ENCODE measurements at regions of chr11 and their contacts with region 1.

Region 1: GRCh38 chr11:66051766-66052663 is at the start of gene SF3B2:
- DNase-seq: peak; percentile 100
- H3K4me3 ChIP-seq: peak within 1 kb of the TSS; percentile 99
- H3K27ac ChIP-seq: peak within 1 kb of the TSS; percentile 89
- H3K4me1 ChIP-seq: peaks cover 21% of the 10 kb centered on the region
- H3K27me3 ChIP-seq: no peaks in the 10 kb centered on the region
- CTCF ChIP-seq: no peak
- total RNA-seq, gene SF3B2: 357 and 358 TPM in 2 replicates

Region 2: GRCh38 chr11:66001942-66002647 is 49.9 kb before region 1 on chr11 and contains the starts of genes BANF1 and EIF1AD:
- CTCF ChIA-PET with region 1: no interaction called
- POLR2A ChIA-PET with region 1: no interaction called
- intact Hi-C with region 1: loop called (anchors 2 kb)
- DNase-seq: peak; percentile 100
- H3K4me3 ChIP-seq: peak within 1 kb of the TSS; percentile 63
- H3K27ac ChIP-seq: peak within 1 kb of the TSS; percentile 93
- H3K4me1 ChIP-seq: peaks cover 3% of the 10 kb centered on the region
- H3K27me3 ChIP-seq: no peaks in the 10 kb centered on the region
- CTCF ChIP-seq: no peak
- total RNA-seq, gene BANF1: 541 and 556 TPM in 2 replicates
- total RNA-seq, gene EIF1AD: 69.4 and 86.2 TPM in 2 replicates

Region 3: GRCh38 chr11:66032962-66033735 is 18.9 kb before region 1 on chr11:
- CTCF ChIA-PET with region 1: interaction called, 11 read pairs
- POLR2A ChIA-PET with region 1: interaction called, 5 read pairs
- intact Hi-C with region 1: no loop called
- DNase-seq: no peak
- H3K4me3 ChIP-seq: no peak overlapping the region
- H3K27ac ChIP-seq: no peak overlapping the region
- H3K4me1 ChIP-seq: no peaks in the 10 kb centered on the region
- H3K27me3 ChIP-seq: no peaks in the 10 kb centered on the region
- CTCF ChIP-seq: no peak

Region 4: DNA sequence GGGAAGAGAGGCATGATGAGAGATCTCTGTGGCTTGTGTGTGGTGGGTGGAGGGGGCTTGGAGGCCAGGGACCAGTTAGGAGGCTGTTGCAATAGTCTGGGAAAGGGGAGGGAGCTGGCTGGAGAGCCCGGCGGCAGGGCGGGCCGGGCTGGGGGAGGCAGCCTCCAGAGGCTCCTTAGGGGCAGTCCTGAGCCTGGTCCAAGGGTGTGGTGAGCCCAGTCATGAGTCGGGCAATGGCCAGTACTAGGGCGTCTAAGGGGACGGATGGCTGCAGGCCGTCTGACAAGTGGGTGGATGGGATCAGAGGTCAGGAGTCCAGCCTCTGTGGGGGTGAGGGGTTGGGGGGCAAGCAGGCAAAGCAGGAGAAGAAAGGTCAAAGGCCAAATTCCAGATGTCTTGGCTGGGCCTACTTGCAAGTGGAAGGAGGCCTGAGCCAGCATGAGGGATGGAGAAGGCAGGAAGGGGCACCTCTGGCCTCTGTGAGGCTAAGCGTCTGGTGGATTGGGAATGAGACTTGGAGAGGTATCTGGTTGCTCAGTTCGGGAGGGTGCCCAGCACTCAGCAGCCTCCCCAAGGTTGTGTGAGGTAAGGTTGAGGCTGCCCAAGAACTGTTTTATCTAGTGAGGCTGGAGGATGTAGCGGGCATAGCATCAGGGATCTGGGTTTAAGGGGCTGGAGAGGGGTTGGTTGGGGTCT is 270.9 kb after region 1 on chr11:
- CTCF ChIA-PET with region 1: no interaction called
- POLR2A ChIA-PET with region 1: no interaction called
- intact Hi-C with region 1: no loop called
- DNase-seq: no peak
- H3K4me3 ChIP-seq: no peak overlapping the region
- H3K27ac ChIP-seq: peak overlapping the region; percentile 56
- H3K4me1 ChIP-seq: peaks cover 31% of the 10 kb centered on the region
- H3K27me3 ChIP-seq: no peaks in the 10 kb centered on the region
- CTCF ChIP-seq: no peak

Region 5: DNA sequence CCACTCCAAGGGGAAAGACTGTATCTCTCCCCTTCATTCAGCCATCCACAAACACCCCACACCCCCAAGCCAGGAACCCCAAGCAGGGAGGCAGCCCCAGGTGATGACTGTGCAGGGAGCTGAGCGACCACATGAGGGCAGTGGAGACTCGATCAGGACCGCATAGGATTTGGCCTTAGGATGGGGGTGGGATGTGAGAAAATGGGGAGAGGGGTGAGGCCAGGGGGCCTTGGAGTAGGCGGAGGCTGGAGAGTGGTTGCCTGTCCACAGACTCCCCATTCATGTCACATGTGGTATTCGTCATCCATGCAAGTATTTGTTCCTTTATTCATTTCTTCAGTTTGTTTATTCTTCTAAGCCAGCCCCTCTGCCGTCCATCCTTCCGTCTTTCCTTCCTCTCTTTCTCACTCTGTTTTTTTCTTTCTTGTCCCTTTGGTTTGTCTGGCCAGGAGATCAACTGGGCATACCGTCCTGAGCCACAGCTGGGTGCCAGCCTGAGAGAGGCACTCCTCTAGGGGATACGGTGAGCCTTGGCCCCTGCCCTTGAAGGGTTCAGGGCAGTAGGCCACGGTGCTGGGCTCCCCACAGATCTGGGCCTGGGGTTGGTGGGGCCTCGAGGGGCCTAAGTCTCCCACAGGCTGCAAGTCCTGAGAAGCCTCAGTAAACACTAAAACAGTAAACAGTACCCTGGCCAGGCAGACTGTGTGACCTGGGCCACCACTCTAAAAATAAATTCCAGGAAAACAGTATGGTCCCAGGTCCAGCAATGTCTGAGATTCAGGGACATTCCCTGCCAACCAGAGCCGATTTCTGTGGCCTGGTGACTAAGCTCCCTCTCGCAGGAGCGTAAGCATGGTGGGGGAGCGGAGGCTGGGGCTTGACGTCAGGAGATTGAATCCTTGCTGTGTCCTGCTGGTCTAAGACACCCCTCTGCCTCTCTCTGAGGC is 1002.2 kb after region 1 on chr11:
- CTCF ChIA-PET with region 1: no interaction called
- POLR2A ChIA-PET with region 1: no interaction called
- intact Hi-C with region 1: no loop called
- DNase-seq: peak; percentile 71
- H3K4me3 ChIP-seq: no peak overlapping the region
- H3K27ac ChIP-seq: no peak overlapping the region
- H3K4me1 ChIP-seq: peaks cover 12% of the 10 kb centered on the region
- H3K27me3 ChIP-seq: no peaks in the 10 kb centered on the region
- CTCF ChIP-seq: peak; percentile 93